ENCODE measurements at regions of chr16 and their contacts with region 1.

Region 1: GRCh38 chr16:30844671-30845449 is 49.0 kb downstream of the BCL7C start:
- DNase-seq: peak; percentile 81
- H3K4me3 ChIP-seq: no peak overlapping the region
- H3K27ac ChIP-seq: no peak overlapping the region
- H3K4me1 ChIP-seq: no peaks in the 10 kb centered on the region
- H3K27me3 ChIP-seq: no peaks in the 10 kb centered on the region
- CTCF ChIP-seq: peak; percentile 80 to 82
- POLR2A ChIP-seq: no peak

Region 2: GRCh38 chr16:30805370-30806169 is 39.3 kb before region 1 on chr16:
- CTCF ChIA-PET with region 1: interaction called, 13 read pairs
- POLR2A ChIA-PET with region 1: no interaction called
- dilution Hi-C with region 1: no loop called
- intact Hi-C with region 1: no loop called
- DNase-seq: peak; percentile 74
- H3K4me3 ChIP-seq: peak overlapping the region; percentile 18 to 57 (median 37)
- H3K27ac ChIP-seq: peak overlapping the region; percentile 18
- H3K4me1 ChIP-seq: peaks cover 8% of the 10 kb centered on the region
- H3K27me3 ChIP-seq: no peaks in the 10 kb centered on the region
- CTCF ChIP-seq: peak in 1 of 2 donors; percentile 3
- POLR2A ChIP-seq: peak; percentile 88

Region 3: DNA sequence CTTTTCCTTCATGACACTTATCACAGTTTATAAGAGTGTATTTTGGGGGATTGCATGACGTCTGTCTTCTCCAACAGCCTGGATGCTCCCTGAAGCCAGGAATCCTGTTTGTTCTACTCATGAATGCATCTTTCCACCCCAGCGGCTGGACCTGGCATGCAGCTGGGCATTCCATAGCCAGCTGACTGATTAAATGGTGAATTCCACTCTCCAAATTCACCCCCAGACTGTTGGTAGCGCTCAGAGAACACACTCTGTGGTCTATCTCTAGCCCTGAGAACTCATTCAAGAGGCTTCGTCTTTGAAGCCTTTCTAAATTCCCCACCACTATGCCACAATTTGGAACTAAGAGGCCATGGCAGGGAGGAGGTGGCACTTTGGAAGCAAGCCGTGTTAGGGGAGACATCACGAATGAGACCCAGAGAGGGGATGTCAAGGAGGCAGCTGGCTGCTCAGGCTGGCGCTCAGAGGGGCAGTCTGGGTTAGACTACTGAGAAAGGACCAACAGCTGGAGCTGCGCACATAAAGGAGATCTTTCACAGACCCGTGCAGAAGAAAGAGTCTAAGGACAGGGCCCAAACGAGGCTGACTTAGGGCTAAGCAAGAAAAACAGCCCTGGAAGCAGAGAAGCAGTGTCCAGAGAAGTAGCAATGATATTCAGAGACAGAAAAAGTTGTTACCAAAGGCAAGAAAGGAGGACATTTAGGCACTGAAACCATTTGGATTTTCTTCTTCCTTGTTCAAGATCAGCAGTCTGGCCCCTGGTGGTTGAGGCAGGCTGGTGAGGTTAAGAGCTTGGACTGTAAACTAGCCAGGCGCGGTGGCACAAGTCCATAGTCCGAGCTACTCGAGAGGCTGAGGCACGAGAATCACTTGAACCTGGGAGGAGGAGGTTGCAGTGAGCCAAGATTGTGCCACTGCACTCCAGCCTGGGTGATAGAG is 15.5 kb before region 1 on chr16:
- CTCF ChIA-PET with region 1: interaction called, 18 read pairs
- POLR2A ChIA-PET with region 1: no interaction called
- dilution Hi-C with region 1: no loop called
- intact Hi-C with region 1: no loop called
- DNase-seq: no peak
- H3K4me3 ChIP-seq: no peak overlapping the region
- H3K27ac ChIP-seq: no peak overlapping the region
- H3K4me1 ChIP-seq: no peaks in the 10 kb centered on the region
- H3K27me3 ChIP-seq: peaks cover 0 to 4% of the 10 kb centered on the region in 2 experiments
- CTCF ChIP-seq: no peak
- POLR2A ChIP-seq: no peak

Region 4: DNA sequence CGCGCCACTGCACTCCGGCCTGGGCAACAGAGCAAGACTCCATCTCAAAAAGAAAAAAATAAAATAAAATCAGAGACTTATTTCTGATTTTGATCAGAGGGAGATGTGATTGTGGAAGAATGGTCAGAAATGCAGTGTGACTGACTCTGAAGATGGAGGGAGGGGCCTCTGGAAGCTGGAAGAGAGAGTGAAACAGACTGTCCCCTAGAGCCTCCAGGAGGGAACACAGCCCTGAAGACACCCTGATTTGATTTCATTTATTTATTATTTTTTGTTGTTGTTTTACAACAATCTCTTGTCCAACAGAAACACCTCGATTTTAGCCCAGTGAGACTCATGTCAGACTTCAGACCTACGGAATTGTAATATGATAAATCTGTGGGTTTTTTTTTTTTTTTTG is 22.9 kb after region 1 on chr16:
- CTCF ChIA-PET with region 1: interaction called, 26 read pairs
- POLR2A ChIA-PET with region 1: no interaction called
- dilution Hi-C with region 1: no loop called
- intact Hi-C with region 1: no loop called
- DNase-seq: no peak
- H3K4me3 ChIP-seq: no peak overlapping the region
- H3K27ac ChIP-seq: no peak overlapping the region
- H3K4me1 ChIP-seq: no peaks in the 10 kb centered on the region
- H3K27me3 ChIP-seq: no peaks in the 10 kb centered on the region
- CTCF ChIP-seq: peak in 1 of 2 donors; percentile 3
- POLR2A ChIP-seq: no peak

Region 5: DNA sequence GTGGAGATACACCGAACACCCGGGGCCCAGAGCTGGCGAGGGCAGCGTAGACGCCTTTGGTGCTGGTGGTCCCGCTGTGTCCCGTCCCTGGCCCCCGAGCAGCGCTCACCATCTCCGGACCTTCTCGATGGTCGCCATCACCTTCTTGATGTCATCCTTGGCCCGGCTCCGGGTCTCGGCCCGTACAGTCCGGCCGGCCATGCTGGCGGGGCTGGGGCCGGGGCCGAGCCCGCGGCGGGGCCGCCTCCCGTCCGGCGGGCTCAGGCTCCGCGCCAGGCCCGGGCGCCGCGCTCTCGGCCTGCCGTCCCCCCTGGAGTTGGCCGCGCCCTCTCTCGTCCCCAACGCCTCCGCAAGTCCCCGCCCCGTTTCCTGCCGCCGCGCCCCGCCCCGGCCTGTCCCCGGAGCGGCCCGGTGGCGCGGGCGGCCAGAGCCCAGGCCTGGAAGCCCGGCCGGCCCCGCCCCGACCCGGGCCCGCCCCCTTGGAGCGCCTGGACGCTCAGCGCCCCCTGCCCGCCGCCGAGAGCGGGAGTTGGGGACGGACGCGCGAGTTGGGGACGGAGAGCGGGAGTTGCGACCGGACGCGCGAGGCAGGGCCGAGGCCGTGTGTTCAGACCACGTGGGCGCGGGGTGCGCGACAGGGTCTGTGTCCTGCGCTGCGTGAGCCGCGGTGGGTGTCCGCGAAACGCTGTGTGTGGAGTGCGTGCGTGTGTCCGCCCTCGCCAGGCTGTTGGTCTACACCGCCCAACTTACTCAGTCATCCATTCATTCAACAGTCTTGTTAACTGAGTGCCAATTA is 49.1 kb after region 1 on chr16 and contains the start of gene BCL7C:
- CTCF ChIA-PET with region 1: interaction called, 18 read pairs
- POLR2A ChIA-PET with region 1: no interaction called
- dilution Hi-C with region 1: no loop called
- intact Hi-C with region 1: loop called (anchors 1 kb)
- DNase-seq: peak; percentile 89
- H3K4me3 ChIP-seq: peak within 1 kb of the TSS; percentile 39 to 72 (median 63)
- H3K27ac ChIP-seq: peak within 1 kb of the TSS; percentile 38
- H3K4me1 ChIP-seq: peaks cover 13% of the 10 kb centered on the region
- H3K27me3 ChIP-seq: no peaks in the 10 kb centered on the region
- CTCF ChIP-seq: peak; percentile 24 to 55
- POLR2A ChIP-seq: peak; percentile 88
- total RNA-seq, gene BCL7C: 38.3 and 39.5 TPM in 2 replicates

Region 6: GRCh38 chr16:30910427-30911029 is 65.7 kb after region 1 on chr16:
- CTCF ChIA-PET with region 1: interaction called, 26 read pairs
- POLR2A ChIA-PET with region 1: no interaction called
- dilution Hi-C with region 1: no loop called
- intact Hi-C with region 1: no loop called
- DNase-seq: no peak
- H3K4me3 ChIP-seq: no peak overlapping the region
- H3K27ac ChIP-seq: no peak overlapping the region
- H3K4me1 ChIP-seq: no peaks in the 10 kb centered on the region
- H3K27me3 ChIP-seq: no peaks in the 10 kb centered on the region
- CTCF ChIP-seq: no peak
- POLR2A ChIP-seq: no peak

Measured in endothelial cell of umbilical vein (primary cell).